ENCODE measurements at regions of chr9 and their contacts with region 1.

Region 1: DNA sequence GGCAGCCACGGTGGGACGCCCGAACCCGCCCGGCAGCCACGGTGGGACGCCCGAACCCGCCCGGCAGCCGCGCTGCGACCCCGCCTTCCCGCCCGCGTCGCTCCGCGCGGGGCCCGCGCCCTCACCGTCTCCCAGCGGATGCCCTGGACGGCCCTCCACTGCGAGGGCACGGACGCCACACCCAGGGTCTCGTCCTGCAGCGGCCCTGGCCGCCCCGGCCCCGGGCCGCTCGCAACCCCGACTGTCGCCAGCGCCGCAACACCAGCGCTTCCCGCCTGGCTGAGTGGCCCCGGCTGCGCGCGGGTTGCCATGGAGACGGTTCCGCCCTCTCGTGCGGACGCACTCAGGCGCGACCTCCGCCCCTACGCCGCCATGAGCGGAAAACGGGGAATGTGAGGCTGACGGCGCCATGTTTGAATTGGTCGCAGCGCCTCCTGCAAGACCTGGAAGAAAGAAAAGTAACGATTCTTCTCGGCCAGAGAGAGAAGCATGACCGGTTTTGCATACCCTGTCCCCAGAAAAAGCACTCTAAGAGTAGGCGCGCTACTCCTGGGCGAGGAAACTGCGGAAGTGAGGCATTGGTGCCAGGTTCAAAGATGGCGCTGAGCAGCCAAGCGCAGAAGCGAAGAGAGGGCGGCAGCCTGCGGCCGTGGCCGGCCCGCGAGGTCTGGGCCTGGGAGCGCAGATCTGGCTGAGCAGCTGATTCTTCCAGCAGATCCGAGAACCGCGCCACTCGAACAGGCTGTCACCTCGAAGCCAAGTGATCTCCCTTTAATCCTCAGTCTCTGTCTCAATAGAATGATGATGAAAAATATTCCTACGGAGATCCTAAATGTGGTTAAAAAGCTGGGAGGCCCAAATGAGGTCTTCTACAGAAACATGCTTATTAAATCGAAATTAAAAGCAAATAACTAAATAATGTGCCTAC is at the start of gene DYNC2I2:
- DNase-seq: peak; percentile 94
- ATAC-seq: peak; percentile 99
- H3K4me3 ChIP-seq: peak within 1 kb of the TSS; percentile 48 to 83 (median 71)
- H3K27ac ChIP-seq: peak within 1 kb of the TSS; percentile 92 to 100 (median 94)
- H3K4me1 ChIP-seq: no peaks in the 10 kb centered on the region
- H3K27me3 ChIP-seq: no peaks in the 10 kb centered on the region
- CTCF ChIP-seq: peak in 1 of 5 experiments; percentile 9
- POLR2A ChIP-seq: peak; percentile 20 to 29
- total RNA-seq, gene DYNC2I2: 11.4 to 29.1 (median 21.1) TPM

Region 2: GRCh38 chr9:128455849-128456612 is 200.6 kb before region 1 on chr9 and contains the start of gene ODF2:
- in situ Hi-C with region 1: no loop called
- intact Hi-C with region 1: no loop called
- DNase-seq: peak; percentile 94 to 95
- ATAC-seq: peak; percentile 95 to 97
- H3K4me3 ChIP-seq: peak within 1 kb of the TSS; percentile 69 to 97 (median 76)
- H3K27ac ChIP-seq: peak within 1 kb of the TSS; percentile 58 to 80 (median 73)
- H3K4me1 ChIP-seq: peaks cover 0 to 10% of the 10 kb centered on the region in 2 donors
- H3K27me3 ChIP-seq: peaks cover 6 to 15% (median 13%) of the 10 kb centered on the region in 3 donors
- CTCF ChIP-seq: no peak
- POLR2A ChIP-seq: peak; percentile 50 to 55
- total RNA-seq, gene ODF2: 8.5 to 11.0 (median 9.9) TPM

Region 3: DNA sequence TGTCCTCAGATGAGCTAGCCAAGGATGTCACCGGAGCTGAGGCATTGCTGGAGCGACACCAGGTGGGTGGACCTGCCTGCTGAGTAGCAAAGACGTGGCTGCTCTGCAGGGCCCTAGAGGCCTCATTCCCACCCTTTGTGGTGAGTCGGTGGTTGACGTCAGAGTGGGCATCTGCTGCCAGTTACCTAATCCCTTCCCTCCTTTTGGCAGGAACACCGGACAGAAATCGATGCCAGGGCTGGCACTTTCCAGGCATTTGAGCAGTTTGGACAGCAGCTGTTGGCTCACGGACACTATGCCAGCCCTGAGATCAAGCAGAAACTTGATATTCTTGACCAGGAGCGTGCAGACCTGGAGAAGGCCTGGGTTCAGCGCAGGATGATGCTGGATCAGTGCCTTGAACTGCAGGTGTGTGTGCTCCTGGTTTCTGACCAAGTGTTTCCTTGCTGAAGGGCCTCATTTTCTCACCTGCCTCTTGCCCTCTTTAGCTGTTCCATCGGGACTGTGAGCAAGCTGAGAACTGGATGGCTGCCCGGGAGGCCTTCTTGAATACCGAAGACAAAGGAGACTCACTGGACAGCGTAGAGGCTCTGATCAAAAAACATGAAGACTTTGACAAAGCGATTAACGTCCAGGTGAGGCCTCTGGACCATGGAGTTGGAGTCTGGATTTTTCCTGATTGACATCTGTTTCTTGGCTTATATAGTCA is 48.9 kb before region 1 on chr9:
- in situ Hi-C with region 1: no loop called
- intact Hi-C with region 1: loop called (anchors 2 kb)
- DNase-seq: peak; percentile 88 to 98
- ATAC-seq: peak; percentile 98 to 99
- H3K4me3 ChIP-seq: no peak overlapping the region
- H3K27ac ChIP-seq: peak overlapping the region; percentile 73 to 83 (median 76)
- H3K4me1 ChIP-seq: peaks cover 14 to 15% of the 10 kb centered on the region in 2 donors
- H3K27me3 ChIP-seq: no peaks in the 10 kb centered on the region
- CTCF ChIP-seq: no peak
- POLR2A ChIP-seq: no peak

Region 4: GRCh38 chr9:128635283-128636023 is 21.2 kb before region 1 on chr9:
- in situ Hi-C with region 1: no loop called
- intact Hi-C with region 1: loop called (anchors 2 kb)
- DNase-seq: peak in 1 of 2 donors; percentile 72
- ATAC-seq: peak; percentile 25 to 75
- H3K4me3 ChIP-seq: no peak overlapping the region
- H3K27ac ChIP-seq: peak overlapping the region; percentile 30 to 71 (median 63)
- H3K4me1 ChIP-seq: peaks cover 8 to 16% of the 10 kb centered on the region in 2 donors
- H3K27me3 ChIP-seq: no peaks in the 10 kb centered on the region
- CTCF ChIP-seq: peak in 4 of 5 experiments; percentile 27 to 42 (median 40)
- POLR2A ChIP-seq: no peak

Measured in gastrocnemius medialis (tissue), 4 donors.